Activated naive CD4-positive, alpha-beta T cell treated with anti-CD3 and anti-CD28 coated beads, Interleukin-2, amount 10 ng/mL, durations not matched to agents 7 days and 5 days (primary cell): ENCODE measurements at regions of chr17 and their contacts with region 1.

Region 1: GRCh38 chr17:42405963-42406495 is 17.0 kb downstream of the CAVIN1 start:
- DNase-seq: peak; percentile 87
- H3K4me3 Mint-ChIP-seq: no peak overlapping the region
- H3K27ac Mint-ChIP-seq: no peak overlapping the region
- H3K4me1 Mint-ChIP-seq: peaks cover 22% of the 10 kb centered on the region
- H3K27me3 Mint-ChIP-seq: peaks cover 43% of the 10 kb centered on the region

Region 2: GRCh38 chr17:42183741-42184711 is 222.0 kb before region 1 on chr17:
- CTCF ChIA-PET with region 1: interaction called, 12 read pairs
- DNase-seq: peak; percentile 80
- H3K4me3 Mint-ChIP-seq: peak overlapping the region; percentile 82
- H3K27ac Mint-ChIP-seq: peak overlapping the region; percentile 86
- H3K4me1 Mint-ChIP-seq: peaks cover 60% of the 10 kb centered on the region
- H3K27me3 Mint-ChIP-seq: peaks cover 67% of the 10 kb centered on the region

Region 3: GRCh38 chr17:42312285-42313130 is 93.5 kb before region 1 on chr17:
- CTCF ChIA-PET with region 1: interaction called, 167 read pairs
- DNase-seq: peak; percentile 85
- H3K4me3 Mint-ChIP-seq: peak overlapping the region; percentile 38
- H3K27ac Mint-ChIP-seq: peak overlapping the region; percentile 76
- H3K4me1 Mint-ChIP-seq: peaks cover 79% of the 10 kb centered on the region
- H3K27me3 Mint-ChIP-seq: no peaks in the 10 kb centered on the region

Region 4: GRCh38 chr17:42322382-42323267 is 83.4 kb before region 1 on chr17:
- CTCF ChIA-PET with region 1: interaction called, 237 read pairs
- DNase-seq: peak; percentile 98
- H3K4me3 Mint-ChIP-seq: no peak overlapping the region
- H3K27ac Mint-ChIP-seq: peak overlapping the region; percentile 78
- H3K4me1 Mint-ChIP-seq: peaks cover 51% of the 10 kb centered on the region
- H3K27me3 Mint-ChIP-seq: no peaks in the 10 kb centered on the region

Region 5: GRCh38 chr17:42337442-42337841 is 68.6 kb before region 1 on chr17:
- CTCF ChIA-PET with region 1: interaction called, 16 read pairs
- DNase-seq: peak; percentile 84
- H3K4me3 Mint-ChIP-seq: peak overlapping the region; percentile 13
- H3K27ac Mint-ChIP-seq: peak overlapping the region; percentile 84
- H3K4me1 Mint-ChIP-seq: peaks cover 72% of the 10 kb centered on the region
- H3K27me3 Mint-ChIP-seq: no peaks in the 10 kb centered on the region

Region 6: GRCh38 chr17:42388381-42389134 is 17.5 kb before region 1 on chr17 and contains the start of gene STAT3:
- CTCF ChIA-PET with region 1: interaction called, 27 read pairs
- DNase-seq: peak; percentile 100
- H3K4me3 Mint-ChIP-seq: peak within 1 kb of the TSS; percentile 96
- H3K27ac Mint-ChIP-seq: peak within 1 kb of the TSS; percentile 99
- H3K4me1 Mint-ChIP-seq: peaks cover 48% of the 10 kb centered on the region
- H3K27me3 Mint-ChIP-seq: peaks cover 4% of the 10 kb centered on the region

Region 7: DNA sequence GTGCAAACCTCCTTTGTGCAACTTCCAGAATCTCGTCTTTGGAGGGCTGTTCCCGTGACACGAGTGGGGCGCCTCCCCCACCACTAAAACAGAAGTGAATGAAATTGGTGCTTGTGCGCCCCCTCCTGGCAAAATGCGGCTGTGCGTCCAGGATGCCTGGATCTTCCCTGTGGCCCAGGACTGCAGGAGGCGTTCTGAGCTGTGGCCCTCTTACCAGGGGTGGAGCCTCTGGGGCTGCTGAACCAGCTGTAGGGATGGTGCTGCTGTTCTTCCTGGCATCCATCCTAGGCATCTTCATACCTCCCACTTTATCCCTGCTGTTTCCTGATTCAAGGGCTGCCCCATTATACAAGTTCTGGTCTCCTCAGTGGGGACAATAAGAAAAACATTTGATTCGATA is 111.5 kb after region 1 on chr17:
- CTCF ChIA-PET with region 1: interaction called, 12 read pairs
- DNase-seq: peak; percentile 89
- H3K4me3 Mint-ChIP-seq: no peak overlapping the region
- H3K27ac Mint-ChIP-seq: no peak overlapping the region
- H3K4me1 Mint-ChIP-seq: peaks cover 5% of the 10 kb centered on the region
- H3K27me3 Mint-ChIP-seq: peaks cover 64% of the 10 kb centered on the region

Region 8: GRCh38 chr17:42577532-42578281 is 171.7 kb after region 1 on chr17 and contains the start of gene PSMC3IP:
- CTCF ChIA-PET with region 1: no interaction called
- DNase-seq: peak; percentile 97
- H3K4me3 Mint-ChIP-seq: peak within 1 kb of the TSS; percentile 92
- H3K27ac Mint-ChIP-seq: peak within 1 kb of the TSS; percentile 89
- H3K4me1 Mint-ChIP-seq: peaks cover 50% of the 10 kb centered on the region
- H3K27me3 Mint-ChIP-seq: no peaks in the 10 kb centered on the region